Panc1 (cell line): ENCODE measurements at regions of chr19 and their contacts with region 1.

Region 1: DNA sequence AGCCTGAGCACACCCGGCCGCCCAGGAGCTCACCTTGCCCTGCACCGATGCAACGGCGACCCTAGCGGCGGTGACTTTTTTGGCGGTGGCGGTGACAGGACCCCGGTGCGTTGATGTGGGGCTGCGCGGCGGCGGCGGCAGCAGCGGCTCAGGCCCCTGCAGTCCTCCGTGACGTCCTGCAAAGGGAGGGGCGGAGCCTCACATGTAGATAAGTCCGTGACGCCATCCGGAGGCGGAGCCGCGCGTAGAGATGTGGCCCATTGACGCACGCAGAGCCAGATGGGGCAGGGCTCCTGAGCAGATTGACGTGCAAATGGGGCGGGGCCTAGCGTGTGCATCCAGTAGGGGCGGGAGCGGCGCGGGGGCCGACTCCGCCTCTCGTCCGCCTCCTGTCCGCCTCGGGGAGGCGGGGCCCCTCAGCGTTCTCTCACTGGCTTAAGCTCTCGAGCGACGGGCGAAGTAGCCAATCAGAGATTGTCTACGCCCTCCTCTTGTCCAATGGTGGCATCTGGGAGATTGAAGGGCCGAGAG is at the start of gene RAB3A:
- DNase-seq: peak; percentile 98
- ATAC-seq: peak; percentile 97
- H3K4me3 ChIP-seq: peak within 1 kb of the TSS; percentile 81 to 90
- H3K27ac ChIP-seq: peak within 1 kb of the TSS; percentile 83
- H3K4me1 ChIP-seq: peaks cover 3% of the 10 kb centered on the region; the same call in 1 of the 2 replicates
- H3K27me3 ChIP-seq: no peaks in the 10 kb centered on the region
- CTCF ChIP-seq: no peak
- total RNA-seq, gene RAB3A: 1.0 TPM

Region 2: GRCh38 chr19:18269070-18269723 is 65.3 kb after region 1 on chr19:
- CTCF ChIA-PET with region 1: interaction called, 7 read pairs
- POLR2A ChIA-PET with region 1: interaction called, 11 read pairs
- in situ Hi-C with region 1: no loop called
- intact Hi-C with region 1: no loop called
- DNase-seq: no peak
- ATAC-seq: no peak
- H3K4me3 ChIP-seq: no peak overlapping the region
- H3K27ac ChIP-seq: no peak overlapping the region
- H3K4me1 ChIP-seq: peaks cover 5% of the 10 kb centered on the region; the same call in 1 of the 2 replicates
- H3K27me3 ChIP-seq: no peaks in the 10 kb centered on the region
- CTCF ChIP-seq: no peak

Region 3: DNA sequence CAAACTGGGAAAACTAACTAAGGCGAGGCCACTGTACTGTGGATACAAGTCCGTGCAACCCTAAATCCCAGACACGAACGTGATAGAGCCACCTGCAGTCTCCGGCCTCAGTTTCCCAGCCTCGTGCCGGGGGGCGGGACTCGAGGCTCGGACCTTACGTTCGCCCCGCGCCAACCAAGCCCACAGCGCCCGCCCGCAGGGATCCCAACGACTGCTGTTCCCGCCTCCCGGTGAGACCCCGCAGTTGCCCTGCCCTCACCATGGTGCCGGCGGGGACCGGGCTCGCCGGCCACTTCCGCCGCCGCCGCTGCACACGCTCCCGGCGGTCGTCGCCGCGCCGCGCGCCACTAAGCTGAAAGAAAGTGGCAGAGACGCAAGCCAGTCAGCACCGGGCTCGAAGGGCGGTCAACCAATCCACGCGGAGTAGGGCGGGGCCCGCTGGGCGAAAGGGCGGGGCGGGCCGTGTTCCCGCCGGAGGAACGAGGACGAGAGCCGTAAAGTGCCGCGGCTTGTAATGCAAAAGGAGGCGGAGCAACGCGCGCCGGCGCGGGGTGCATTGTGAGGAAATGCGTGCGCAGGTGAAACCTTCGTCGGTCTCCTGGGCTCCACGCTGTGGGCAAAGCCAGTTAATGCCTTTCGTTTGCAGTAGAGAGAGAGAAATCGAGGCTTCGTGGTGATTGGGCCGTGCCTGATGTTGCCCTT is 119.0 kb after region 1 on chr19 and contains the start of gene LSM4:
- CTCF ChIA-PET with region 1: no interaction called
- POLR2A ChIA-PET with region 1: no interaction called
- in situ Hi-C with region 1: no loop called
- intact Hi-C with region 1: no loop called
- DNase-seq: peak; percentile 84
- ATAC-seq: peak; percentile 99
- H3K4me3 ChIP-seq: peak within 1 kb of the TSS; percentile 86 to 92
- H3K27ac ChIP-seq: peak within 1 kb of the TSS; percentile 98
- H3K4me1 ChIP-seq: peaks cover 25% of the 10 kb centered on the region
- H3K27me3 ChIP-seq: no peaks in the 10 kb centered on the region
- CTCF ChIP-seq: no peak
- total RNA-seq, gene LSM4: 209 TPM